CD8-positive, alpha-beta T cell (primary cell): ENCODE measurements at regions of chr19 and their contacts with region 1.

Region 1: DNA sequence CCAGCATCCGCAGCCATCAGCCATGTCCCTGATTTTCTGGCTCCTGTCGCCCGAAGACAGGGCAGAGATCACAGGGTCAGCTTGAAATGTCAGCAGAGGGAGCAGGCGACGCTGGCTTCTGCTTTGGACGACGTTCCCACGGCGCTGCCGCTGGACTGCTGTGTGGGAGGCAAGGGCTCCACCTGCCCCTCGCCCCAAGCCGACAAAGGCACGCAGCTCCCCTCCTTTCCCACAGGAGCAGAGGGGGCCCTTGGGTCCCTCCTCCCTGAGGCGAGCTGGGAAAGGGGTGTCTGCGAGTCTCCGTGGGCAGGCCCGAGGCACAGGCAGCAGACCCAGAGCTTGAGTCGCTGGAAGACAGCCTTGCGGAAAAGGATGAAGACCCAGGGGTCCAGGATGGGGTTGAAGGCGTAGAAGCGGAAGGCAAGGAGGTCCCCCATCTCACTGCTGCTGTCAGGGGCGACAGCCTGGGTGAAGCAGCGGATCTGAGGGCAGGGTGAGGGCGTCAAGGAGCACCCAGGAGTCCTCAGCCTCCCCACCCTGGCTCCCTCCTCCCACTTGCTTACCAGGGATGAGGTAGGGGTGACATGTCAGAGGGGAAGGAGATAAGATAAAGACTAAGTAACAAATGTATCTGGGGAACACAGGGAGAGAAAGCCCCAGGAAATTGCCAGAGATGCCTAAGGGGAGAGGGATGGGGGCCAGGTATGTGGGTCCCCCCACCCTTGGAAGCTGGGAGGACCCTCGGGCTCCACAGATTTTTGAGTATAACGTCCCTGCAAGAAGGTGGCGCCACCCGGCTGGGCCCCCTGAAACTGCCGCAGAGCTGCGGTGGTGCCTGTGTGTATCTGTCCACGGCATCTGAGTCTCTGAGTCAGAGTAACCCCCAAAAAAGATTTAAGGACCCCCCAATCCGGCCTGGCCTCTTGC is 3.4 kb downstream of the PTGIR start:
- DNase-seq: no peak
- ATAC-seq: no peak
- H3K4me3 ChIP-seq: no peak overlapping the region
- H3K4me3 Mint-ChIP-seq: peak overlapping the region; percentile 42
- H3K27ac ChIP-seq: no peak overlapping the region
- H3K27ac Mint-ChIP-seq: peak overlapping the region; percentile 49
- H3K4me1 ChIP-seq: peaks cover 73% of the 10 kb centered on the region
- H3K4me1 Mint-ChIP-seq: peaks cover 53% of the 10 kb centered on the region
- H3K27me3 ChIP-seq: no peaks in the 10 kb centered on the region
- H3K27me3 Mint-ChIP-seq: no peaks in the 10 kb centered on the region
- CTCF ChIP-seq: no peak

Region 2: DNA sequence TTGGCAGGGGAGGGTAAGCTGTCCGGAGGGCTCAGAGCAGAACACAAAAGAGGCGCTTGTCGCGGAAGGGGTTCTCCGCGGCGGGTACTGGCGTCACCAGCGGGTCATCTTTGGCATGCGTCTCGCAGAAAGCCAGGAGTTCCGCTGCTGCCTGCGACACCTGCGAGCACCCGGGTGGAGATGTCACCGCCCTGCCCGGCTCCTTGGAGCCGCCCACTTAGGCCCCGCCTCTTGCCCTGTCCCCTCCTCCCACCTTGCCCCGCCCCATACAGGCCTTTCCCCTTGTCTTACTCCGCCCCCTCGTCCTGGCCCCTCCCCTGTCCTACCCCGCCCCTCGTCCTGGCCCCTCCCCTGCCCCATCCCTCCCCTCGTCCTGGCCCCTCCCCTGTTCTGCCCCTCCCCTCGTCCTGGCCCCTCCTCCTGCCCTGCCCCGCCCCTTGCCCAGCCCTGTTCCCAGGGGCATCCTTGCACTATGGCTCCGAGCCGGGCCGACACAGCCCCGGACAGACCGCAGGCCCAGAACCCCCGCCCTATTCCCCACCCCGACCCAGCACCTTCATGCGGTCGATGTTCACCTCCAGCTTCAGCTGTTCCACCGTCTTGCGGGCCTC is 12.7 kb after region 1 on chr19:
- CTCF ChIA-PET with region 1: interaction called, 12 read pairs
- POLR2A ChIA-PET with region 1: interaction called, 3 read pairs
- intact Hi-C with region 1: no loop called
- DNase-seq: peak; percentile 86 to 96 (median 92)
- ATAC-seq: peak; percentile 83
- H3K4me3 ChIP-seq: peak overlapping the region; percentile 40 to 59
- H3K4me3 Mint-ChIP-seq: peak overlapping the region; percentile 80
- H3K27ac ChIP-seq: peak overlapping the region; percentile 35 to 48
- H3K27ac Mint-ChIP-seq: peak overlapping the region; percentile 90
- H3K4me1 ChIP-seq: peaks cover 36% of the 10 kb centered on the region
- H3K4me1 Mint-ChIP-seq: peaks cover 24% of the 10 kb centered on the region
- H3K27me3 ChIP-seq: peaks cover 0 to 24% of the 10 kb centered on the region in 2 experiments
- H3K27me3 Mint-ChIP-seq: no peaks in the 10 kb centered on the region
- CTCF ChIP-seq: no peak